ENCODE measurements at regions of chr20 and their contacts with region 1.

Region 1: DNA sequence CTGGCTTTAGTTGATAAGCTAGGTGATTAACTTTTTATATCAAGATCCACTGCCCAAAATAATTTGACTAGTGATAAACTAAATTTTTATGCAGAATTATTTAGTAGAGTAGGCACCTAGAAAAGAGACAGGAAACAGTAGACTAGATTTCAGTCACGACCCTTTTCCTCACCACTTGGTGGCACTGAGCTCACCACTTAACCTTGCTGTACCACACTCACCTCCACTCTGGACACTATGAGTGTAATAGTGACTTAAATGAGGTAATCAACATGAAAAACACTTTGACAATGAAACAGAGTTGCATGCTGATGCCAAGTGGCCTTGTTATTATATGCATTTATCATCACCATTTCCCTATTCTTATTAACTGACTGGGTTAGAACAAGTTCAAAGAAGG is 730.4 kb downstream of the KIF16B start:
- DNase-seq: peak; percentile 52
- ATAC-seq: peak; percentile 66
- H3K4me3 ChIP-seq: no peak overlapping the region
- H3K4me3 Mint-ChIP-seq: no peak overlapping the region
- H3K27ac ChIP-seq: no peak overlapping the region
- H3K27ac Mint-ChIP-seq: peak overlapping the region; percentile 28
- H3K4me1 ChIP-seq: peaks cover 6 to 7% of the 10 kb centered on the region in 2 donors
- H3K4me1 Mint-ChIP-seq: peaks cover 14% of the 10 kb centered on the region
- H3K27me3 ChIP-seq: no peaks in the 10 kb centered on the region
- H3K27me3 Mint-ChIP-seq: peaks cover 4% of the 10 kb centered on the region
- CTCF ChIP-seq: peak; percentile 50

Region 2: GRCh38 chr20:16241915-16242314 is 399.0 kb after region 1 on chr20:
- CTCF ChIA-PET with region 1: interaction called, 7 read pairs
- POLR2A ChIA-PET with region 1: no interaction called
- intact Hi-C with region 1: loop called (anchors 1 kb)
- DNase-seq: peak; percentile 46
- ATAC-seq: peak; percentile 43
- H3K4me3 ChIP-seq: no peak overlapping the region
- H3K4me3 Mint-ChIP-seq: no peak overlapping the region
- H3K27ac ChIP-seq: no peak overlapping the region
- H3K27ac Mint-ChIP-seq: no peak overlapping the region
- H3K4me1 ChIP-seq: peaks cover 10 to 11% of the 10 kb centered on the region in 2 donors
- H3K4me1 Mint-ChIP-seq: peaks cover 10% of the 10 kb centered on the region
- H3K27me3 ChIP-seq: no peaks in the 10 kb centered on the region
- H3K27me3 Mint-ChIP-seq: peaks cover 5% of the 10 kb centered on the region
- CTCF ChIP-seq: peak; percentile 37